Activated CD8-positive, alpha-beta T cell treated with anti-CD3 and anti-CD28 coated beads, Interleukin-2, amount 10 ng/mL, durations not matched to agents 7 days and 5 days (primary cell): ENCODE measurements at regions of chr11 and their contacts with region 1.

Region 1: GRCh38 chr11:77449060-77449521 is 24.8 kb downstream of the PAK1 start:
- DNase-seq: peak; percentile 36
- ATAC-seq: peak; percentile 57
- H3K4me3 Mint-ChIP-seq: peak overlapping the region; percentile 55
- H3K27ac Mint-ChIP-seq: peak overlapping the region; percentile 76
- H3K4me1 Mint-ChIP-seq: peaks cover 76% of the 10 kb centered on the region
- H3K27me3 Mint-ChIP-seq: no peaks in the 10 kb centered on the region

Region 2: GRCh38 chr11:77346906-77347603 is 102.0 kb before region 1 on chr11:
- CTCF ChIA-PET with region 1: no interaction called
- POLR2A ChIA-PET with region 1: no interaction called
- DNase-seq: no peak
- ATAC-seq: no peak
- H3K4me3 Mint-ChIP-seq: no peak overlapping the region
- H3K27ac Mint-ChIP-seq: no peak overlapping the region
- H3K4me1 Mint-ChIP-seq: no peaks in the 10 kb centered on the region
- H3K27me3 Mint-ChIP-seq: no peaks in the 10 kb centered on the region

Region 3: GRCh38 chr11:77411717-77412441 is 37.2 kb before region 1 on chr11:
- CTCF ChIA-PET with region 1: interaction called, 12 read pairs
- POLR2A ChIA-PET with region 1: no interaction called
- DNase-seq: peak; percentile 88
- ATAC-seq: peak; percentile 99
- H3K4me3 Mint-ChIP-seq: peak overlapping the region; percentile 90
- H3K27ac Mint-ChIP-seq: peak overlapping the region; percentile 91
- H3K4me1 Mint-ChIP-seq: peaks cover 51% of the 10 kb centered on the region
- H3K27me3 Mint-ChIP-seq: no peaks in the 10 kb centered on the region

Region 4: GRCh38 chr11:77647654-77648305 is 198.7 kb after region 1 on chr11:
- CTCF ChIA-PET with region 1: no interaction called
- POLR2A ChIA-PET with region 1: no interaction called
- DNase-seq: no peak
- ATAC-seq: no peak
- H3K4me3 Mint-ChIP-seq: no peak overlapping the region
- H3K27ac Mint-ChIP-seq: no peak overlapping the region
- H3K4me1 Mint-ChIP-seq: peaks cover 3% of the 10 kb centered on the region
- H3K27me3 Mint-ChIP-seq: peaks cover 5% of the 10 kb centered on the region